CD4-positive, alpha-beta T cell (primary cell): ENCODE measurements at regions of chr1 and their contacts with region 1.

Region 1: GRCh38 chr1:205121660-205122488 is at the start of gene RBBP5:
- DNase-seq: peak; percentile 93 to 99 (median 95)
- ATAC-seq: peak; percentile 91
- H3K4me3 ChIP-seq: peak within 1 kb of the TSS; percentile 79
- H3K4me3 Mint-ChIP-seq: peak within 1 kb of the TSS; percentile 94
- H3K27ac ChIP-seq: peak within 1 kb of the TSS; percentile 90 to 94
- H3K27ac Mint-ChIP-seq: peak within 1 kb of the TSS; percentile 98
- H3K4me1 ChIP-seq: peaks cover 32% of the 10 kb centered on the region
- H3K4me1 Mint-ChIP-seq: peaks cover 46% of the 10 kb centered on the region
- H3K27me3 ChIP-seq: no peaks in the 10 kb centered on the region
- H3K27me3 Mint-ChIP-seq: no peaks in the 10 kb centered on the region
- CTCF ChIP-seq: peak; percentile 57
- total RNA-seq, gene RBBP5: 14.8 to 15.6 TPM

Region 2: DNA sequence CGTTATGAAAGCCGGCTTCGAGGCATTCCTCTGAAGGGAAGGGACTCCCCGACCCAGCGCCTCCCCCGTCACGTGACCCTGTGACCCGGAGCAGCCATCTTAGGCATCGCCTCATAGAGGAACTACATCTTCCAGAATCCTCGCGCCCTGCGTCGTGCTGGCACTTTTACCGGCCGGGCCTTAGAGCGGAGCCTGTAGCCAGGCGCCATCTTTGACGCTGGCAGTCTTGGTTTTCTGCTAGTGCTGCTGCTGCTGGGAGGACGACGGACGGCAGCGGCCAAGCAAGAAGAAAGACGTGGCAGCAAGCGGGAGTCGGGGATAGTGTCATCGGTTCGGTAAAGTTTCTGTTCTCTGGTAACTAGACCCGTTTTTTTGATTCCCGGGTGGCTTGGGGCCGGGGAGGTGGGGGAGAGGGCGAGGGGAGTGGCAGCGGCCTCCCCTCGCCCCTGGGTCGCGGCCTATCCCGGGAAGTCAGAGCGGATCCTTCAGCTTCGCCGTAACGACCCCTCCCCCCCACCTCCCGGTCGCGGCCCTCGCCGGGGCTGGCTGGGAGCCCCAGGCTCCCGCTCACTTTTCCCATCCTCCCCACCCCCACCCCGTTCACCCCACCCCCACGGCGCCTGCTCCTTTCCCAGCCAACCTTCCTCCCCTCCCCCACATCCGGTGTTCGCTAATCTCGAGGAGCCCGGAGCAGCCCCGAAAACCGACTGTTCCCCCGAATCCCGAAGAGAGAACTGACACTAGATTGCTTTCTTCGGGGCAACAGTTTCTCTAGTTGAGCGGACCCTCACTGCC is 1326.2 kb before region 1 on chr1 and contains the starts of genes ZBED6 and ZC3H11A:
- CTCF ChIA-PET with region 1: no interaction called
- POLR2A ChIA-PET with region 1: no interaction called
- intact Hi-C with region 1: loop called in 1 of 2 experiments (anchors 5 kb)
- DNase-seq: peak; percentile 96 to 100 (median 98)
- ATAC-seq: peak; percentile 98
- H3K4me3 ChIP-seq: peak within 1 kb of the TSS; percentile 83
- H3K4me3 Mint-ChIP-seq: peak within 1 kb of the TSS; percentile 98
- H3K27ac ChIP-seq: peak within 1 kb of the TSS; percentile 83 to 87
- H3K27ac Mint-ChIP-seq: peak within 1 kb of the TSS; percentile 86
- H3K4me1 ChIP-seq: peaks cover 32% of the 10 kb centered on the region
- H3K4me1 Mint-ChIP-seq: peaks cover 56% of the 10 kb centered on the region
- H3K27me3 ChIP-seq: no peaks in the 10 kb centered on the region
- H3K27me3 Mint-ChIP-seq: no peaks in the 10 kb centered on the region
- CTCF ChIP-seq: no peak
- total RNA-seq, gene ZBED6: 25.0 to 25.2 TPM
- total RNA-seq, gene ZC3H11A: 67.6 to 73.3 TPM

Region 3: DNA sequence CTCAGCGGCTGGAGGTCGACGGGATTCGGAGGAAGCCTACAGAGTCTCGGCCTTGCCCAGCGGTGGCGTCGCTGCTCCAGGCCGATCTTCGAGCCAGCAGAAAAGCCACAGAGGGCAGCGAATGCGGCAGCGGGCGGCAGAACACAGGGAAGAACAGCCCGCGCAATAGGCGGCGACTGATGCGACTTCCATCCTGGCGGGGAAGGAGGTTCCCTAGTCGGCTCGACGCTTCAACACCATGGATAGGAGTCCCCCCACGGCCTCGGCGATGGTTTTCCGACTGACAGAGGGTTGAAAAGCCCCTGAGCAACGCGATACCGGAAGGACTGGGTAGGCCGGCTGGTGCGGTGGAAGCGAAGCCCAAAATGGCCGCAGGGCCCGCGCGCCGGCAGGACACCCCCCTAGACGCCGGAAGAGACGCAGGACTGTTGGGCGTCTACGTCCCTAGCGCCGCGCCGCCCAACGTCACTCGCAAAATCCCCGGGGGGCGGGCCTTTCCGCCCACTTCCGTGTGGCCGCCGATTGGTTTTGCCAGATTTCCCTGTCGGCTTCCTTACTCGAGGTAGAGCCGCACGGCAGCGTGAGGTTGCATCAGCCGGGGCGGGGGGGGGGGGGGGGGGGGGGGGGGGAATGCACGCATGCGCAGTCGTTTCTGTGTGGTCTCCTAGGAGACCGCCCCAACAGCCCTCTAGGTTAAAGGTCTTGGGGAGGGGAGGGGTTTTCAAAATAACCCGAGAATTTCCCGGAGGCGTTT is 710.2 kb before region 1 on chr1 and contains the start of gene PPP1R15B:
- CTCF ChIA-PET with region 1: no interaction called
- POLR2A ChIA-PET with region 1: no interaction called
- intact Hi-C with region 1: loop called in 1 of 2 experiments (anchors 5 kb)
- DNase-seq: peak; percentile 95 to 99 (median 97)
- ATAC-seq: peak; percentile 89
- H3K4me3 ChIP-seq: peak within 1 kb of the TSS; percentile 98
- H3K4me3 Mint-ChIP-seq: peak within 1 kb of the TSS; percentile 100
- H3K27ac ChIP-seq: peak within 1 kb of the TSS; percentile 100
- H3K27ac Mint-ChIP-seq: peak within 1 kb of the TSS; percentile 100
- H3K4me1 ChIP-seq: peaks cover 11% of the 10 kb centered on the region
- H3K4me1 Mint-ChIP-seq: peaks cover 25% of the 10 kb centered on the region
- H3K27me3 ChIP-seq: no peaks in the 10 kb centered on the region
- H3K27me3 Mint-ChIP-seq: no peaks in the 10 kb centered on the region
- CTCF ChIP-seq: no peak
- total RNA-seq, gene PPP1R15B: 171 to 179 TPM

Region 4: GRCh38 chr1:205141236-205142101 is 19.6 kb after region 1 on chr1:
- CTCF ChIA-PET with region 1: interaction called, 19 read pairs
- POLR2A ChIA-PET with region 1: interaction called, 3 read pairs
- intact Hi-C with region 1: loop called (anchors 1 to 2 kb)
- DNase-seq: peak; percentile 56 to 86 (median 67)
- ATAC-seq: peak; percentile 95
- H3K4me3 ChIP-seq: no peak overlapping the region
- H3K4me3 Mint-ChIP-seq: no peak overlapping the region
- H3K27ac ChIP-seq: no peak overlapping the region
- H3K27ac Mint-ChIP-seq: peak overlapping the region; percentile 18
- H3K4me1 ChIP-seq: peaks cover 8% of the 10 kb centered on the region
- H3K4me1 Mint-ChIP-seq: peaks cover 10% of the 10 kb centered on the region
- H3K27me3 ChIP-seq: no peaks in the 10 kb centered on the region
- H3K27me3 Mint-ChIP-seq: no peaks in the 10 kb centered on the region
- CTCF ChIP-seq: peak; percentile 83

Region 5: GRCh38 chr1:205211169-205211838 is 89.4 kb after region 1 on chr1 and contains the start of gene DSTYK:
- CTCF ChIA-PET with region 1: no interaction called
- POLR2A ChIA-PET with region 1: interaction called, 6 read pairs
- intact Hi-C with region 1: loop called (anchors 1 to 2 kb)
- DNase-seq: peak; percentile 84 to 95 (median 88)
- ATAC-seq: peak; percentile 92
- H3K4me3 ChIP-seq: peak within 1 kb of the TSS; percentile 99
- H3K4me3 Mint-ChIP-seq: peak within 1 kb of the TSS; percentile 98
- H3K27ac ChIP-seq: peak within 1 kb of the TSS; percentile 67 to 80
- H3K27ac Mint-ChIP-seq: peak within 1 kb of the TSS; percentile 98
- H3K4me1 ChIP-seq: peaks cover 19% of the 10 kb centered on the region
- H3K4me1 Mint-ChIP-seq: peaks cover 57% of the 10 kb centered on the region
- H3K27me3 ChIP-seq: no peaks in the 10 kb centered on the region
- H3K27me3 Mint-ChIP-seq: peaks cover 5% of the 10 kb centered on the region
- CTCF ChIP-seq: no peak
- total RNA-seq, gene DSTYK: 13.9 to 15.3 TPM

Region 6: DNA sequence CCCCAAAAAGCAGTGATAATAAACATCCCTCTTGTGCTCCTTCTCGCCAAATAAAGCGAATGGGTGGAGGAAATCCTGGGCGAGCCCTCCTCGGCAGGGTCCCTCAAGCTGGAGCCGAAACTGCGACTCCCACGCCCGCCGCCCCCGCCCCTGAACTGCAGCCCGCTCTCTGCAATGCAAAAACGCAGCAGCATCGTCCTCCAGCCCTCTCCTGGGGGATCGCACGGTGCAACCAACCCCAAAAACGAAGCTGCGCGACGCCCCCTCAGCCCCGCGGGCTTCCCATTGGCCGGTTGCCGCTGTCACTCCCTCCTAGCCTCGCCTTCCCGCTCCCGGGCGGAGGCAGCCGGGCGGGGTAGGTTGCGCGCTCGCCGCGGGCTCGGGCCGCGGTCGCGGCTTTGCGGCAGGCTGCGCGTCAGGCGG is 105.7 kb after region 1 on chr1 and contains the start of gene TMCC2:
- CTCF ChIA-PET with region 1: interaction called, 9 read pairs
- POLR2A ChIA-PET with region 1: no interaction called
- intact Hi-C with region 1: loop called in 1 of 2 experiments (anchors 5 kb)
- DNase-seq: peak; percentile 49 to 87 (median 74)
- ATAC-seq: peak; percentile 76
- H3K4me3 ChIP-seq: peak within 1 kb of the TSS; percentile 64
- H3K4me3 Mint-ChIP-seq: peak within 1 kb of the TSS; percentile 94
- H3K27ac ChIP-seq: no peak within 1 kb of the TSS
- H3K27ac Mint-ChIP-seq: peak within 1 kb of the TSS; percentile 4
- H3K4me1 ChIP-seq: peaks cover 31% of the 10 kb centered on the region
- H3K4me1 Mint-ChIP-seq: peaks cover 30% of the 10 kb centered on the region
- H3K27me3 ChIP-seq: peaks cover 5 to 8% of the 10 kb centered on the region in 2 experiments
- H3K27me3 Mint-ChIP-seq: peaks cover 22% of the 10 kb centered on the region
- CTCF ChIP-seq: no peak
- total RNA-seq, gene TMCC2: 0.74 to 1.1 TPM

Region 7: GRCh38 chr1:205775015-205775716 is 653.3 kb after region 1 on chr1 and contains the start of gene RAB29:
- CTCF ChIA-PET with region 1: no interaction called
- POLR2A ChIA-PET with region 1: no interaction called
- intact Hi-C with region 1: loop called in 1 of 2 experiments (anchors 10 kb)
- DNase-seq: peak; percentile 70 to 95 (median 80)
- ATAC-seq: peak; percentile 89
- H3K4me3 ChIP-seq: peak within 1 kb of the TSS; percentile 78
- H3K4me3 Mint-ChIP-seq: peak within 1 kb of the TSS; percentile 96
- H3K27ac ChIP-seq: peak within 1 kb of the TSS; percentile 87 to 90
- H3K27ac Mint-ChIP-seq: peak within 1 kb of the TSS; percentile 97
- H3K4me1 ChIP-seq: peaks cover 37% of the 10 kb centered on the region
- H3K4me1 Mint-ChIP-seq: peaks cover 61% of the 10 kb centered on the region
- H3K27me3 ChIP-seq: no peaks in the 10 kb centered on the region
- H3K27me3 Mint-ChIP-seq: no peaks in the 10 kb centered on the region
- CTCF ChIP-seq: no peak
- total RNA-seq, gene RAB29: 11.7 to 11.8 TPM